ENCODE measurements at regions of chr12 and their contacts with region 1.

Region 1: GRCh38 chr12:38823739-38824138 is 81.7 kb downstream of the CPNE8 start:
- DNase-seq: no peak
- ATAC-seq: no peak

Region 2: GRCh38 chr12:38610808-38611350 is 212.9 kb before region 1 on chr12:
- intact Hi-C with region 1: no loop called
- DNase-seq: no peak
- ATAC-seq: no peak

Region 3: DNA sequence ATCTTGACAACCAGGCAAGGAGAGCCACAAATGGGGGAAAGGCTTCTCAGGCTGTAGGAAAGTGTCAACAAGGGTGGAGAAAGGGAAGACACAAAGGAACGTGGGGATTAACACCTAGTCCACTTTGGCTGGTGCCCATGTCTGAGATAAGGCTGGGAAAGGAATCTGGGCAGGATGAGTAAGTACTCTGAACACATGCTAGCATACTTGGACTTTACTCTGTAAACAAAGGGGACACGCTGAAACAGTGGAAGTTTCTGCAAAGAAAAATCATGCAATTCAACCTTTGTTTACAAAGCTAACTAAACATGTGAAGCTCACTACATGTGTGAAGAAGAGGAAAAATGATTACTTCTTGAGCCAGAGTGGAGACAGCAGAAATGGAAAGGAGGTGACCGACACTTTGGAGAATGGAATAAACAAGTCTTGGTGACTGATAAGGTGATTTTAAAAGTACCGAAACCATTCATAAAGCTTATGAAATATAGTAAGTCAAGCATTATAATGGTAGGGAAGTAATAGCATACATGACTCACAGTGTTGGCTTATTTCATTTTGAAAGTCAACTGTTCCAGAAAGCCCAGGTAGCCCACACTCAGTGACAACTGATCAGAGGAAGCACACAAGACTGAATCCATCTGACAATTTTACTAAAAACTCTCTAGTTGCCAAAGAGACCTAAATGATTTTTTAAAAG is 68.5 kb after region 1 on chr12:
- intact Hi-C with region 1: loop called in 1 of 2 experiments (anchors 5 kb)
- DNase-seq: peak; percentile 24
- ATAC-seq: peak; percentile 89 to 95

Region 4: GRCh38 chr12:39116867-39117266 is 293.1 kb after region 1 on chr12:
- intact Hi-C with region 1: no loop called
- DNase-seq: no peak
- ATAC-seq: no peak